ENCODE measurements at regions of chr4 and their contacts with region 1.

Region 1: DNA sequence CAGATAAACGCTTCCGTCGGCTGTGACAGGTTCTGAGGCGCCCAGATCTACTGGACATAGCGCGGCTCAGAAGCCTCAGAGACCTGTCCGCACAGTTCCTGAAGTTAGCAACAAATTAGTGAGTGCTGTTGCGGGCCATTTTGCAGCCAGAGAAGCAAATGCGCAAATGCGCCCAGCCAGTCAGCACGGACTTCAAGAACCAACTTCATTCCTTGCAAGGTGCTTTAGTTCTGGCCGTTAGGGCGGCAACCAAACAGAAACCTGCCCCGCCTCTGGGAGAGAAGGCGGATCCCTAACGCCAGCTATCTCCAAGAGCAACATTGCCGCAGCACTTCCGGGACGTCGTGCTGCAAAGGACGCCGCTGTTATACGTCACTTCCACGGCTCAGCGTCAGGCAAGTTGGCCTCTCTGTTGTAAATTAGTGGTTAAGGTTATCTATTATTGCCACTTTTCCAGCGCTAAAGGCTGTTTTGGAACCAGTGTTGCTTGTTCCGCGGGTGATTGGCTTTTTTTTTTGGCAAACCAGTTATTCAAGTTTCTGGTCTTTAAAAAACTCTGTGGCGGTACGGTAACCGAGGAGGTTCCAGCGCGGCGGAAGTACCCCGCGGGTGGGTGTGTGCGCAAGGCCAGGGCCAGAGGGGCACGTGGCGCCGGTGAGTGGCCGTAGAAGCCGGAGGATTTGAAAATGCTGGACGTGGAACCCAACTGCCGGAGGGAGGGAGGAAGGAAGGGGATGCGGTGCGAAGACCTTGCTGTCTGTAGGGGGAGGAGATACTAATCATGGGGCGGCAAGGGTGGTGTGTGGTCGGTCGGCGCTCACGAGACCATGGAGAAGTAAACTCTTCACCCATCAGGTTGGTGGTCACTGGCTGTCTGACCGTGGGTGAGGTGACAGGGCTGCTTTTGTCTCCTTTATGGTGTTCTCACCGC is at the start of gene GAR1:
- DNase-seq: peak; percentile 95
- ATAC-seq: peak; percentile 100
- total RNA-seq, gene GAR1: 7.5 TPM

Region 2: DNA sequence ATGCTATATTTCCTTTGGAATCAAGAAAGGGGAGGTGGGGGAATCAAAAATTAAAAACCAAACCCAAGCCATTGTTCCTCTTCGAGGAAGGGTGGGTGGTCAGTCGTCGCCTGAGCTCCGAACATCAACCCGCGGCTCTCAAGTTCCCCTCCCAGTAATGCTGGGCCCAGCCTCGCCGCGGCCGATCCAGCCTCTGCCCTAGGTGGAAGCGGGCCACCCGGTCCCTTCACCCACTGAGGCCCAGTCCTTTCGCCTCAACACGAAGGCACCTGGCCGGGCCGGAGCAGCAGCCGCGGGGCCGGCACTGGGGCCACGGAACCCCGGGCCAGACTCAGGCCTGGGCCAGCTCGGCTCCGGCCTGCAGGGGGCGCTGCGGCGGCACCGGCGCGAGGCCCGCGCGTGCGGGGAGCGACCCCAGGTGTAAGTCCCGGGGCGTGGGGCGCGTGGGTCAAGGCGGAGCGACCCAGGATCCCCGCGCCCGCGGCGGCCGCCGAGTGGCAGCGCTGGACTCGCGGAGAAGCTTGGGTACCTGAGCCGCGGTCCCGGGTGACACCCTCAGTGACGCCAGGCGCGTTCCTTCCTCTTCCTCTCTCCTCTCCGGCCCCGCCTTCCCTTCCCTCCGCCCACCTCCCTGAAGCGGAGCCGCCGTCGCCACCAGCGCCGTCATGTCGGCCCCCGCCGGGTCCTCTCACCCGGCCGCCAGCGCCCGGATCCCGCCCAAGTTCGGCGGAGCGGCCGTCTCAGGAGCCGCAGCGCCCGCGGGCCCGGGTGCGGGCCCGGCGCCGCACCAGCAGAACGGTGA is 382.0 kb before region 1 on chr4 and contains the start of gene SEC24B:
- intact Hi-C with region 1: loop called (anchors 5 kb)
- DNase-seq: peak; percentile 96
- ATAC-seq: peak; percentile 96
- total RNA-seq, gene SEC24B: 26.1 TPM

Region 3: GRCh38 chr4:109729718-109730618 is 85.4 kb before region 1 on chr4 and contains the start of gene PLA2G12A:
- intact Hi-C with region 1: loop called (anchors 1 kb)
- DNase-seq: peak; percentile 87
- ATAC-seq: peak; percentile 97
- total RNA-seq, gene PLA2G12A: 64.8 TPM

Region 4: DNA sequence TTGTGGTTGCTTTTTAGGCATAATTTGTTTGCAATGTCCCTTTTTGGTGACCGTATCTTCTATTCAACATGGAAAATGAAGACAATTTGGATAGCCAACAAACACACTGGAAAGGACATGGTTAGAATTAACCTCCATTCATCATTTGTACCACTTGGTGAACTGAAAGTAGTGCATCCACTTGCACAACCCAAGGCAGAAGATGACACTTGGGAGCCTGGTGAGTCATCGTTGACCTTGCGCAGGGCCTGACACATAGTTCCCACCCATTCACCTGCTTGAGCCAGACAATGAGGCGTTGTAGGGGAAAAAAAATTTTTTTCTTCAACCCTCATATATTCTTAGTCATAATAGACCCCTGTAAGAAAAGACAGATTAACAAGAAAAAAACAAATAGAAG is 129.6 kb after region 1 on chr4:
- intact Hi-C with region 1: no loop called
- DNase-seq: no peak
- ATAC-seq: no peak

Region 5: GRCh38 chr4:109977854-109978501 is 162.6 kb after region 1 on chr4:
- intact Hi-C with region 1: loop called (anchors 10 kb)
- DNase-seq: no peak
- ATAC-seq: no peak

Measured in Right ventricle myocardium inferior (tissue), 1 donor.